A673 (cell line): ENCODE measurements at regions of chr20 and their contacts with region 1.

Region 1: GRCh38 chr20:23420943-23421931 is at the start of gene NAPB:
- DNase-seq: peak; percentile 97
- H3K4me3 ChIP-seq: peak within 1 kb of the TSS; percentile 98
- H3K27ac ChIP-seq: peak within 1 kb of the TSS; percentile 83
- H3K4me1 ChIP-seq: peaks cover 5% of the 10 kb centered on the region
- H3K27me3 ChIP-seq: no peaks in the 10 kb centered on the region
- CTCF ChIP-seq: peak; percentile 28; the same call in 1 of the 2 replicates
- total RNA-seq, gene NAPB: 9.6 and 11.6 TPM in 2 replicates

Region 2: DNA sequence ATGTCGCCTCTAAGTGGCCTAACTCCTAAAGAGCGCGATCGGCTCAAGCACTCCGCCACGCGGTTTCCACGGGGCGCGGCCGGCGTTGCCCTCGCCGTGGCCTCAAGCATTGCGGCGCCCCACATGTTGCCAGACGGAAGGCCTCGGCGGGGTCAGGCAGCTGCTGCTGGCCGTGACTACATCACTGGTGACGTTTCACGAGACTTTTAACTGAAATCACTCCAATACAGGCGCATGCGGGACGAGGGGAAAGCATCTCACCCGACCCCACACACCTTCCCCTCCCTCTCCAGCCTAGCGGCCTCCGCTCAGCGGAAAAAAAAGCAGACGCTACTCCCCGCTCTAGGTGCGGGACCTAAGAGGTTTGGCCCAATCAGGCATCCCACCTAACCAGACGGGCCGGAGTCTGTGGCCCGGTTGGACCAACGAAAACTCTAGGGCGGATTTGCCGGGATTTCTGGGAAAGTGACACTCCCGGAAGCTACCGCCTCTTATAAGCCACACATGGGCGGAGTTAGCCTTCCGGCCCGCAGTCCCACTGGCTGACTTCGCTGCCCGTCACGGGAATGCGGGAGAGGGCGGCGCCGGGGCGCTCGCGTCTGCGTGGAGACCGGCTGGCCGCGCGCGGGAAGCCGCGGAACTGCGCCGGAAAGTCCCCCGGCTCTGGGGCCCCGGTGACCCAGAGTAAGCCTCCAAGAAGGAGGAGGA is 70.9 kb before region 1 on chr20 and contains the start of gene NXT1:
- CTCF ChIA-PET with region 1: interaction called, 12 read pairs
- POLR2A ChIA-PET with region 1: no interaction called
- intact Hi-C with region 1: no loop called
- DNase-seq: peak; percentile 98
- H3K4me3 ChIP-seq: peak within 1 kb of the TSS; percentile 96
- H3K27ac ChIP-seq: peak within 1 kb of the TSS; percentile 88
- H3K4me1 ChIP-seq: peaks cover 10% of the 10 kb centered on the region
- H3K27me3 ChIP-seq: no peaks in the 10 kb centered on the region
- CTCF ChIP-seq: no peak
- total RNA-seq, gene NXT1: 32.1 and 34.4 TPM in 2 replicates

Region 3: DNA sequence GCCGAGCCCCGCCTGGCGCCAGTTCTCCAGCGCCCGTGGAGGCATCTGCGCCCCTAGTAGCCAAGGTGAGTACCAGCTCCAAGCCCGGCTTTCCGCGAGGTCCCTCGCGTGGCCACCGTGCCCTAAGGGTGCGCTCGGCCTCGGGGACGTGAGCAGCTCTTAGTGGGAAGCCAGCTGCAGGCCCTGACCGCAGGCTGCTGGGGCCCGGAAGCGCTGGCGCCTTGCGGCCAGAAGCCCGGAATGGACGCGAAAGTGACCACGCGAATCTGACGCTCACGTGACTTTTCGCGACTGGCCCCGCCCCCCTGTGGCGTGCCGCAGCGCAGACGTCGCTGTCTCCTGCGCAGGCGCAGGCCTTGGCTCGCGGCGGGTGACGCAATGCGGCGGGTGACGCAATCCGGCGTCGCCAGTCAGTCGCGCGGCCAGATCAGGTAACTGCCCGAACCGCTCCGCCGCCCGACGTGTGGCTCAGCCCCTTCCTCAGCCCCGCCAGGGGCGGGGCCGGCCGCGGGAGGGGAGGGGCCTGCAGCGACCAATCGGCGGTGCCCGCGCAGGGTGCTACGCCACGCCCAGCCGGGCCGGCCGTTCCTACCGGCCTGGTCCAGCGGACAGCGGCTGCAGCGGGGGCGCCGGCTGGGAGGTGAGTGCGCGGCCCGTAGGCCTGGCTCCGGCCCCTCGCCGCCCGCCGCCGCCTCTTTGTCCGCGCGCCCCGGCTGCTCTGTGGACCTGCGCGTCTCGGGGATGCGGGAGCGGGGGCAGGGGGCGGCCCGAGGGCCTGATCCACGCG is 59.4 kb before region 1 on chr20 and contains the start of gene GZF1:
- CTCF ChIA-PET with region 1: no interaction called
- POLR2A ChIA-PET with region 1: interaction called, 4 read pairs
- intact Hi-C with region 1: loop called (anchors 5 kb)
- DNase-seq: peak; percentile 98
- H3K4me3 ChIP-seq: peak within 1 kb of the TSS; percentile 96
- H3K27ac ChIP-seq: peak within 1 kb of the TSS; percentile 97
- H3K4me1 ChIP-seq: peaks cover 14% of the 10 kb centered on the region
- H3K27me3 ChIP-seq: no peaks in the 10 kb centered on the region
- CTCF ChIP-seq: no peak
- total RNA-seq, gene GZF1: 13.7 and 14.0 TPM in 2 replicates